BJ (cell line): ENCODE measurements at regions of chr1 and their contacts with region 1.

Region 1: GRCh38 chr1:186375088-186375953 is at the starts of genes ODR4 and TPR:
- DNase-seq: peak; percentile 97
- H3K4me3 ChIP-seq: peak within 1 kb of the TSS; percentile 85
- H3K27me3 ChIP-seq: no peaks in the 10 kb centered on the region
- CTCF ChIP-seq: peak; percentile 93
- polyA plus RNA-seq, gene ODR4: 6.2 and 11.2 TPM in 2 replicates
- polyA plus RNA-seq, gene TPR: 48.6 and 55.3 TPM in 2 replicates

Region 2: DNA sequence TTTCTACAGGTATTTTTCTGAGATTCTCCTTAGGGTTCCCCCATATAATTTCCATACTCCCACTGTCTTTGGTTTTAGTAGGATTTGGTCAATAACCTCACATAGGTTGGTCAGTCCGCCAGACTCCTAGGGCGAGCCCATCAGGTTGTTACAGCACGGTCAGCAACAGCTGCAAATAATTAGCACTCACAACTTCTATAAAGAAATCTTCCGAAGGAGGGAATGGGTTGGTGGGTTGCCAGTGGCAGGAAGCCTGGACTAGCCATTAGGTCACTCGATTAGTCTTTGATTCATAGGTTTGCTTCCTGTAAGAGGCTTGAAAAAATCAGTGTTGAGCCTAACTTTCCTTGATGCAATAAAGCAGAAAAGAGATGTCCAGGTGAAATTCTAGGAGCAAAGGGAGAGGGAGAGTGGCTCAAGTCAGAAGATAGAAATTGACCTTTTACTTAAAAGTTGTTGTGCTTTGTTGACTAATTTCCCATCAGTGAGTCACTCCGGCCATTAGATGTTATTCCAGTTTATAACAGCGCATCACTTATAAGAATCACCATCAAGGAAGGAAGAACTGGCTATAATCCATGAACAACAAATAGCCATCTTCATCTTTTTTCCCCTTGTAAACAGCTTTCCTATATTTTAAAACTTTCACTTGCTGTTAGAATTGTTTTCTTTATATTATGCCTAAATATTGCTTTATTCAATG is 88.6 kb before region 1 on chr1:
- CTCF ChIA-PET with region 1: no interaction called
- POLR2A ChIA-PET with region 1: no interaction called
- DNase-seq: no peak
- H3K4me3 ChIP-seq: no peak overlapping the region
- H3K27me3 ChIP-seq: no peaks in the 10 kb centered on the region
- CTCF ChIP-seq: no peak

Region 3: DNA sequence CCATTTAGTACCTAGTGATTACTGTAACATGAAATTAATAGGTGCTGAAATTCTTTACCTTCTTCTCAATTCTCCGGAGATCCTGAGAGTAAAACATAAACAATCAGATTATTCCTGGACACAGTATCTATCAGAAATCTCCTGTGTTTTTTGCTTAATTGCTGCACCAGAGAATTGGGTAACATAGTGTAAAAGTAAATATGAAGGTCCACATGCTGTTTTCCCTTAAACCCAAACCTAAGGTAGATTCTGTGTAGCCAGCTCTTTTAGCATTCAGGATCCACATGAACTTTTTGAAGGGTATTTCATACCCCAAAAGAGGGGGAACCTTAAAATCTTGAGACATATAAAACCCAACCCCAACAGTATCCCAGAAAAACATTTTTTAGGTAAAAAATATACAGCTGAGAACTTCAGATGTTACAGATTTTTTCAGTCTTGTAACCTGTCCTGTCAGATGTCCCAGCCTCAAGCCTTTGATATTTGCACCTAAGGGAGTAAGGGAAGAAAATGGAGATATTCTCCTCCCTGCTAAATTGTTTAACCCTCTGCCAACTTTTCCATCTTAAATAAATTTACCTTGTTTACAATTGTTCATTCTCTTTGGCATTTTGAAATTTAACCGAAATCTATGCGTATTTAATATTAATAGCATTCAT is 11.5 kb after region 1 on chr1:
- CTCF ChIA-PET with region 1: interaction called, 20 read pairs
- POLR2A ChIA-PET with region 1: no interaction called
- DNase-seq: no peak
- H3K4me3 ChIP-seq: no peak overlapping the region
- H3K27me3 ChIP-seq: no peaks in the 10 kb centered on the region
- CTCF ChIP-seq: no peak

Region 4: GRCh38 chr1:186393476-186393875 is 18.2 kb after region 1 on chr1:
- CTCF ChIA-PET with region 1: interaction called, 8 read pairs
- POLR2A ChIA-PET with region 1: interaction called, 10 read pairs
- DNase-seq: no peak
- H3K4me3 ChIP-seq: no peak overlapping the region
- H3K27me3 ChIP-seq: no peaks in the 10 kb centered on the region
- CTCF ChIP-seq: no peak